GM10248 (cell line): ENCODE measurements at regions of chr12 and their contacts with region 1.

Region 1: DNA sequence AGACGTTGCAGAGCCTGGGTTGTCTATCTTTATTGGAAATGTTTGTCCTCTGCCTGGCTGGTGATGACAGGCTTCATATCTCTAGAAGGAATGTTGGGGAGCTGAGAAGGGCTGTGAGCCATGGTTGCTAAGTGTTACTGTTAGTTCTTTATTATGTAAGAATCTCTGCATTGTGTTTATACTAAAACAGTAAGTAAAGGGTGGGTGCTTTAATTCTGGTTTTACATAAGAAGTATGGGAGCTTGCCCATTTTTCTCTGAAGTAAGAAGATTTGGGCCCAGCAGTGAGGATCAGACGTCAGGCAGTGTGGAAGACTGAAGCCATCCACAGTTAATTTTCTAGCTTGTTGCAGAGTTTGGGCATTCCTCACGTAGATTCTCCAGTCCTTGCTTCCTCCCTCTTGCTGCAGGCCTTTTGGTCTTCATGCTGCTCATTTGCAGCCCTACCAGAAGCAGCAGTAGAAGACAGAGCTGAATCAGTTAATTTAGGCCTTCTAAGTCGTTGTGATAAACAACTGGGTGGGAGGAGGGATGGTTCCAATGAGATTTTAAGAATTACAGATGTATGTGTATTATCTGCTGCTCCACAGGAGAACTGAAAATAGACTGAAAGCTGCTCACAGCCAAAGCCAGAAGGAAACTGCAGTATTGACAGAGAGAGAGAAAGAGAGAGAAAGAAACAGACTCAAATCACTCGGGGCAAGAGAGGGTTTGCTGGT is 21.4 kb downstream of the WNT5B start:
- DNase-seq: no peak
- CTCF ChIP-seq: no peak

Region 2: DNA sequence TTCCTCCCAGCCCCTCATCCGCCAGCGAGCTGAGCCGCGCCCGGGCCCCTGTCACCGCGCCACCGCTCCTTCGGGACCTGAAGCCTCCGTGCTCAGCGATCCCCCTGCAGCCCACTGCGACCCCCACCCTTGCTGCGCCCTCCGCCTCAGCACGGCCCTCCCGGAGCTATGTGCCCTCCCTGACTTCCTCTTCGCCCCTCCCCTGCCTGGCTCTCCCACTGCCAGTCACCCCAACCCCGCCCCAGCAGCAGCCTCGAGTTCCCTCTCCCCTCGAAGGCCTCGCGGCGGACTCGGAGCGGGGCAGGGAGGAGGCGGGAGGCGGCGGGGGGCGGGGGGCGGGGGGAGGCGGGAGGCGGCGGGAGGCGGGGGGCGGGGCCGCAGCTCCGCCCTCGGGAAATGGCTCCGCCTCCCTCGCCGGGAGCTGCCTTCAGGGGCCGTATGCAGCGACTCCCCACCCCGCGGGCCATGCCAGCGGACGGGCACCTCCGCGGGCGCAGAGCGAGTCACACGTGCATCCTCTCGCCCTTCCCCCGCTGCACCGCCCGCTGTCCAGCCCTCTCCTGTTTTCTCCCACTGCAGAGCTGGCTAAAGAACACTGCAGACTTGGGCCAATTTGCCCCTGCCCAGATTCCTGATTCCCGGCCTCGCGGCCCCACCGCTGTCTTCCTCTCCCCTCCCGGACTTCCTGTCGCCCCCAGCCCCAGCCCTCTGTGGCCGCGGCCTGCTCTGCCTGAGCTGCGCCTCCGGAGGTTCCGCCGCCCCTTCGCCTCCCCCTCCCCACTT is 11.3 kb after region 1 on chr12:
- CTCF ChIA-PET with region 1: interaction called, 11 read pairs
- POLR2A ChIA-PET with region 1: no interaction called
- DNase-seq: peak; percentile 88
- CTCF ChIP-seq: no peak

Region 3: DNA sequence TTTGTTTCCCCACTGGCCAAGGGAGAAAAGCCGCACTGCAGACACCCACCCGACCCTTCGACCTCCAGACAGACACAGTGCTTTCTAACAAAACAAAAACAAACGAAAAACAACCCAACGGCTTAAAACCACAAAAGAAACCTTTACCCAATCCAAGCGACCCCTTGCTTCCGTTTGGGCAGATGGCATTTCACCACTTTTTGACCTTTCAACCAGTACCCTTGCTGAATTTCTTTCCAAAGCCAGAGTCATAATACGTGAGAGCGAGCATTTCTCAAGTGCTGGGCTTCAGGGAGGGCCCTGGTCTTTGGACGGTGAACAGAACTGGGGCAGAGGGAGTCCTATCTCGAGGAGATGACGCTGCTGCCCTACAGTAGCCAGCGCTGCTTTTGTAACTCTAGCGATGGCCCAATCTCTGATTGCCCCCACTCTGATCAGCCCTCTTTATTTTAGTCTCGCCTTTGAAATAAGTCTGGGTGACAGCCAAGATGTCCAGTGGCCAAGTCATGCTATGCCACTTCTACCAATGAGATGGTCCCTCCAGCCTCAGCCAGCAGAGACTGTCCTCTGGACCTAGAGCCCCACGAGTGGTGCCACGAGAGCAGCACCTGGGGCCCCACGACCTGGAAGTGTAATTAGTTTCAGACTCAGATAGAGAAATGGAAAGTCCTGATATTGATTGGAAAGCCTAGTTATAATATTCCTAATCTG is 18.6 kb after region 1 on chr12:
- CTCF ChIA-PET with region 1: interaction called, 13 read pairs
- POLR2A ChIA-PET with region 1: no interaction called
- DNase-seq: no peak
- CTCF ChIP-seq: no peak

Region 4: DNA sequence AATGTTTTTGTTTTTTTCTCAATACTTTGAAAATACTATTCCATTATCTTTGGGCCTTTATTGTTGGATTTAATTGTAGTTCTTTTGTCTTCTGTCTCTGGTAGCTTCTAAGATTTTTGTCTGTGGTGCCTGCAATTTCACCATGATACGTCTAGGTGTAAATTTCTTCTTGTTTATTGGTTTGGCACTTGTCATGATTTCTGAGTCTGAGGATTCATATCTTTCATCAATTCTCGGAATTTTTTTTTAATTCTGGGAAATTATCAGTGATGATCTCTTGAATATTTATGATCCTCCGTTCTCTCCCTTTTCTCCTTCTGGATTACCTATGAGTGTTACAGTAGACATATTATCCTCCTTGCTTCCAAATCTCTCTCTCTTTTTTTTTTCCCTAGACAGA is 25.6 kb after region 1 on chr12:
- CTCF ChIA-PET with region 1: interaction called, 13 read pairs
- POLR2A ChIA-PET with region 1: no interaction called
- DNase-seq: no peak
- CTCF ChIP-seq: no peak

Region 5: GRCh38 chr12:1812650-1813302 is 162.4 kb after region 1 on chr12:
- CTCF ChIA-PET with region 1: no interaction called
- POLR2A ChIA-PET with region 1: no interaction called
- DNase-seq: no peak
- CTCF ChIP-seq: no peak

Region 6: DNA sequence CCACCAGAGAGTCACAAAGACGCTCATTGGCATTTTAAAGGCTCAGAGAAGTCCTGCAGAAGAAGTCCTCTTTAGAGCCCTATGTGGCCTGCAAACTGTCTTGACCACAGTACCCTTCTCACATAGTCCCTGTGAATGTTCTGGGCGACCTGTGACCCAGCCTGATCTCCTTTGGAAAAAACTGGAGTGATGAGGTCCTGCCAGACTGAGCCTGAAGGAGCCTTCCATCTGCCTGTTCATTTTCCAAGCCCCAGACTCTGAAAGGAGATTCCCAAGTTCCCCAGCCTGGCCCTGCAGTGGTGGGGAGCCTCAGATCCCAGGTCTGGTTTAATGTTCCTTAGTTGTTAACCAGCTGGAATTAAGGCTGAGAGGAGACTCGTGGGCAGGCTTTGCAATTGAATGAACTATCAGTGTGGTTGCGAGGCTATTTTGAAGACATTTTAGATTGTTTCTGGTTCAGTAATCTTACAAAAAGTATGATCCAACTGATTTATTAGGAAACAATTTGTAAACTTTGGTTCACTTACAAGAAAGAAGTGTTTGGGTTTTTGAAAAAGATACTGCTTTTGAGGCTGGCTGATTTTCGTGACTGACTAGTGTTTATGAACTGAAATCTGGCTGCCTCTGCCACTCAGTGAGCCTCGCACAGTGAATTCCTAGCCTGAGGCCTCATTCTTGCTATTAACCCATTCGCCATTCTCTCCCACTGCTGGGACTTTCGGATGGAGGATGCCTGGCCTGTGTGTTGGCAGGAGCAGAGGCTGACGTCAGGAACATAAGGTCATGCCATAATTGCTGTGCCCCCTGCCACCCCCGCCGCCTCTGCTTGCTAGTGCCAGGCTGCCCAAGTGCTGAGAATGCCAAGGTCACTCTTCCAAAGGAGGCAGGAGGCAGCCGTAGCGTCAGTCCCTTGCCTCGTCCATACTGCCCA is 651.4 kb after region 1 on chr12:
- CTCF ChIA-PET with region 1: no interaction called
- POLR2A ChIA-PET with region 1: no interaction called
- DNase-seq: no peak
- CTCF ChIP-seq: no peak